Posterior vena cava (tissue), 2 donors: ENCODE measurements at regions of chr11 and their contacts with region 1.

Region 1: DNA sequence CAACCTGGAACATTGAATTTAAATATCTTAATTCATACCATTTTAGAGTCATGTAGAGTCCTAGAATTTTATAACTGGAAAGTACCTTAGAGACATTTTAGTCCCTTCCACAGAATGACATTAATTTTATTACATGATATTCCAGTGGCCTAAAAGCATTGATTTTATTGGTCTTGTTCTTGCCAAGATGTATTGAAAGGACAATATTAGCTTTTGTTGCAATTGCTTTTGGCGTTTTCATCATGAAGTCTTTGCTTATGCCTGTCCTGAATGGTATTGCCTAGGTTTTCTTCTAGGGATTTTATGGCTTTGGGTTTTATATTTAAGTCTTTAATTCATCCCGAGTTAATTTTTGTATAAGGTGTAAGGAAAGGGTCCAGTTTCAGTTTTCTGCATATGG is 29.0 kb downstream of the OR51F1 start:
- DNase-seq: no peak

Region 2: GRCh38 chr11:4697585-4697984 is 43.1 kb before region 1 on chr11 and contains the start of gene OR51E2:
- intact Hi-C with region 1: no loop called
- DNase-seq: no peak
- total RNA-seq, gene OR51E2: 0.23 to 0.57 TPM

Region 3: DNA sequence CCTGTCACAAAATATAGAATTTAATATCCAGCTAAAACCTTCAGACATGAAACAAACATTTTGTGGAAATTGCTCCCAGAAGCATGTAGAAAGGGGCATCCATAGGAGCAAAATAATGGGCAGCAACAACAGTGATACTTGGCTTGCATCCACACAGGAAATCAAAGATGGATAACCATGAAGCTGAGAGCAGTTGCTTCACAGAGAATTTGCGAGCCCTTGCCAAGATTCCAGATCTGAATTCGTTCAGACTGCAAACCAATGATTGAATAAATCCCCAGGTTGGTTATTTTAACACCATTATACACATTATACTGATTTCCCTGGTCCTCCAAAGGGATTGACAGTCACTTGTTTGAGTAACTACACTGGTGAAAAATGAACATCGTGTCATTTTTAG is 238.3 kb after region 1 on chr11:
- intact Hi-C with region 1: loop called in 1 of 2 experiments (anchors 5 kb)
- DNase-seq: no peak